ENCODE measurements at regions of chr4 and their contacts with region 1.

Region 1: DNA sequence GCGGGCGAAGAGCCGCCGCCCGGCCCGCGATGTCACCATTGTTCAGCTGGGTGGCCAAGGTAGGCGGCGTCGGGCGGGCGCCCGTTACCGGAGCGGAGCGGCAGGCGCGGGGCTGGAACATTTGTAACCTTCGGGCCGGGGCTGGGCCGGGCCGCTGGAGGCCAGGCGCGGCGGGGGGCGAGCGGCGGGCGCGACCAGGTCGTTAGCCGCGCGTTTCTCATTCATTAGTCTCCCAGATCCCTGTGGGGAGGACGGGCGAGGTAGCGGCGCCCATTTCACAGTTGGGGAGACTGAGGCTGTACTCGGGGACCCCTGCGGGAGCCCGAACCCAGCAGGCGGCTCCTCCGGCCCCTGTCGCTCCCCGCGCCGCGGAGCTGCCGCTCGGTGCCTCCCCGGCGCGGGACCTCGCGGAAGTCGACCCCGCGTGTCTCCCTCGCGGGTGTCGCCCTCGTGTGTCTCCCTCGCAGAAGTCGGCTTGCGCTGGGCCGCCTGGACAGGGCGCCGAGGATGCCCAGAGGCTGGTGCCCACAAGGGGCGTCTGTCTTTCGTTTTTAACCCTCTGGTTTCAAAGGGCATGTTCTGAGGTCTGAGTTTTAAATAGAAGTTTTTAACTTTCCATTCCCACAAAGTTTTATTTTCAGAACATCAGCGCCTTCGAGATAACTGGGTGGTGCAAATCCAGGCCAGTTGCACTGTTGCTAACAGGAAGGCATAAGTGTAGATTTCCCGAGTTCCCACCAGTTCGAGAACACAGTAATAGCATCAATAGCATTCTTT is 17.5 kb downstream of the PTTG2 start:
- DNase-seq: peak; percentile 90
- H3K4me3 ChIP-seq: peak overlapping the region; percentile 61 to 98 (median 80)
- H3K27ac ChIP-seq: peak overlapping the region; percentile 96 to 98 (median 98)
- H3K4me1 ChIP-seq: peaks cover 0 to 52% (median 47%) of the 10 kb centered on the region in 4 donors
- H3K27me3 ChIP-seq: no peaks in the 10 kb centered on the region
- CTCF ChIP-seq: peak; percentile 63 to 75 (median 72)
- EP300 ChIP-seq: no peak
- POLR2A ChIP-seq: no peak

Region 2: DNA sequence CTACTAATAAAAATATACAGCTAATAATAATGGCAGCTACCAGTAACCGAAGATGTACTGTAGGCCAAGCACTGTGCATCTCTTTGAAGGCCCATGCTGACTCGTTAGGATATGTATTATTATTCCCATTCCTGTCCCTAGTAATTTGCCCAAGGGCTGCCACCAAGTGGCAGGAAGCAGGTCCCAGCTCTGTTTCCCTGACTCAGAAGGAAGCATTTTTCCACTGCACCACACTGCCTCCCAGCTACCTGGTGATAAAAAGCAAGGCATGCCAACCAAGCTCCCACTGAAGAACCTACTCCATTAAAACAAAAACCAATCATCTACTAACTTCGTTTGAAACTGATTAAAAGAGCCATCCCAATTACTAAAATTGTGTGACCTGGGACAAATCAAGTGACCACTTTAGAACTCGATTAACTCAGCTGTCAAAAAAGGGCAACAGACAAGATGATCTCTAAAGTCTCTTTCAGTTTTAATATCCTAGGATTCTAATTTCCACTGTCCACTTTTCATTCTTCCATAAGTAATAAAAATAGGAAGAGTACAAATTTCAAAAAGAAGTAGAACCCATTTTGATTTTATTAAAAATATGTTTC is 175.5 kb before region 1 on chr4:
- intact Hi-C with region 1: loop called (anchors 5 kb)
- DNase-seq: no peak
- H3K4me3 ChIP-seq: no peak overlapping the region
- H3K27ac ChIP-seq: no peak overlapping the region
- H3K4me1 ChIP-seq: peaks cover 0 to 18% (median 10%) of the 10 kb centered on the region in 4 donors
- H3K27me3 ChIP-seq: no peaks in the 10 kb centered on the region
- CTCF ChIP-seq: peak in 3 of 4 experiments; percentile 18 to 59 (median 38)
- EP300 ChIP-seq: no peak
- POLR2A ChIP-seq: no peak

Region 3: GRCh38 chr4:37826295-37827029 is 151.2 kb before region 1 on chr4 and contains the start of gene PGM2:
- intact Hi-C with region 1: loop called (anchors 5 kb)
- DNase-seq: peak; percentile 93
- H3K4me3 ChIP-seq: peak within 1 kb of the TSS; percentile 71 to 87 (median 83)
- H3K27ac ChIP-seq: peak within 1 kb of the TSS; percentile 83 to 94 (median 84)
- H3K4me1 ChIP-seq: peaks cover 0 to 34% (median 22%) of the 10 kb centered on the region in 4 donors
- H3K27me3 ChIP-seq: no peaks in the 10 kb centered on the region
- CTCF ChIP-seq: peak in 1 of 4 experiments; percentile 7
- EP300 ChIP-seq: peak in 1 of 4 donors; percentile 4
- POLR2A ChIP-seq: peak; percentile 76 to 88
- total RNA-seq, gene PGM2: 30.0 to 42.3 (median 33.8) TPM

Region 4: GRCh38 chr4:38015886-38016515 is 38.3 kb after region 1 on chr4:
- intact Hi-C with region 1: loop called (anchors 5 kb)
- DNase-seq: no peak
- H3K4me3 ChIP-seq: no peak overlapping the region
- H3K27ac ChIP-seq: peak overlapping the region; percentile 58 to 83 (median 76)
- H3K4me1 ChIP-seq: peaks cover 0 to 83% (median 55%) of the 10 kb centered on the region in 4 donors
- H3K27me3 ChIP-seq: no peaks in the 10 kb centered on the region
- CTCF ChIP-seq: no peak
- EP300 ChIP-seq: peak in 1 of 4 donors; percentile 40
- POLR2A ChIP-seq: no peak

Region 5: DNA sequence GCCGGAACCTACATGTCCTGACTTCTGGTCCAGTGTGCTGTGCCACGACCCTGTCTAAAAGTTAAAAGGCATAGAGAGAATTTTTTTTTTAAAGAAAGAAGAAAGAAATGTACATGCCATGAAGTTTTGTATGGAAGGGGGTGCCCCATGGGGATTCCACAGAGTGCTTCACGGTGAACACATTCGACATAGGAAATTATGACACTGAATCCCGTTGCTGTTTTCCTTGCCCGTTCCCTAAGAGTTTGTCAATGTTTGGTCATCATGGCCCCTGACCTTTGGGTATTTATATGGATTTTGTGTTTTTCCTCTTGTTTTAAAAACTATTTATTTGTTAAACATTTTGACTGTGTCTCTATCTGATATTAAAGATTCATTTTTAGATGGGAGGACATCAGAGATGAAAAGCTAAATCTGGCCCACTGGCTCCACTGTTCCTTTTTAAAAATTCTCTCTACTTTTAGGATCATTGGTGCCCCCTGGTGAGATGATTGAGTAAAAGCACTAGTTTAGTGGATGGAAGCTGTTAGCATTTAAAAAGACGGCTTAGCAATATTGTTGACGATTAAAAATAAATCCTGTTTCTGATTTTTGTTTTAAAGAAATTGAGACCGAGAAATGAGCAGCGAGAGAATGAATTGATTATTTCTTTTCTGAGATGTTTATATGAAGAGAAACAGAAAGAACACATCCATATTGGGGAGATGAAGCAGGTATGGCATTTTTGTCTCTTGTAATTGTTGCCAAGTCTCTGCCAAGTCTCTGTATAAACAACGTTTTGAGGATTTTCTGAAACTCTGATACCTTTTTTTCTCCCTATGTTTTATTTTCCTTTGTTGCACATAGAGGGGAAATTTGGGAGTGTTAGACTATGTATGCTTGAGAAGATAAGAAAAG is 57.6 kb after region 1 on chr4:
- intact Hi-C with region 1: loop called (anchors 5 kb)
- DNase-seq: no peak
- H3K4me3 ChIP-seq: no peak overlapping the region
- H3K27ac ChIP-seq: peak overlapping the region; percentile 39 to 62 (median 57)
- H3K4me1 ChIP-seq: peaks cover 0 to 43% (median 33%) of the 10 kb centered on the region in 4 donors
- H3K27me3 ChIP-seq: no peaks in the 10 kb centered on the region
- CTCF ChIP-seq: peak; percentile 55 to 79 (median 65)
- EP300 ChIP-seq: no peak
- POLR2A ChIP-seq: no peak

Region 6: GRCh38 chr4:38132107-38132673 is 154.5 kb after region 1 on chr4:
- intact Hi-C with region 1: no loop called
- DNase-seq: peak; percentile 89
- H3K4me3 ChIP-seq: no peak overlapping the region
- H3K27ac ChIP-seq: peak overlapping the region; percentile 66 to 85 (median 74)
- H3K4me1 ChIP-seq: peaks cover 0 to 63% (median 58%) of the 10 kb centered on the region in 4 donors
- H3K27me3 ChIP-seq: no peaks in the 10 kb centered on the region
- CTCF ChIP-seq: no peak
- EP300 ChIP-seq: peak in 3 of 4 donors; percentile 36 to 86 (median 37)
- POLR2A ChIP-seq: no peak